ENCODE measurements at regions of chr1 and their contacts with region 1.

Region 1: DNA sequence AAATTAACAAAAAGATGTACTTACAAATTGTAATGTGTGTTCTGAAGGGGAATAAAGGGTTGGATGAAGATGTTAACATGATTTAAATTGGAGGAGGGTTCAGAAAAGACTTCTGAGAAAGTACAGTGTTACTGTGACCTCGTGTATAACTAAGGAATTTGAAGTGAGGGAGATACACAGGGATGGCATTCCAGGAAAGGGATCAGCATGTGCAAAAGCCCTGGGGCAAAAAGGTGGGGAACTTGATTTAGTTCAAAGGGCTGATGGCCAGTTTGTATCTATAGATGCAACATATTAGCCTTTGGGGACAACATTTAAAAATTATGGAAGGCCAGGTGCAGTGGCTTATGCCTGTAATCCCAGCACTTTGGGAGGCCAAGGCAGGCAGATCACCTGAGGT is 33.3 kb upstream of the DEGS1 start:
- DNase-seq: peak; percentile 34
- ATAC-seq: peak; percentile 33; the same call in 1 of the 2 replicates
- H3K4me3 ChIP-seq: no peak overlapping the region
- H3K27ac ChIP-seq: no peak overlapping the region
- H3K4me1 ChIP-seq: no peaks in the 10 kb centered on the region
- H3K27me3 ChIP-seq: no peaks in the 10 kb centered on the region
- CTCF ChIP-seq: no peak

Region 2: GRCh38 chr1:224266105-224266935 is 116.6 kb after region 1 on chr1:
- CTCF ChIA-PET with region 1: no interaction called
- POLR2A ChIA-PET with region 1: no interaction called
- intact Hi-C with region 1: no loop called
- DNase-seq: no peak
- ATAC-seq: no peak
- H3K4me3 ChIP-seq: no peak overlapping the region
- H3K27ac ChIP-seq: no peak overlapping the region
- H3K4me1 ChIP-seq: 0 out of 2 replicates have a peak, but pooled peaks cover 3% of the 10 kb centered on the region
- H3K27me3 ChIP-seq: no peaks in the 10 kb centered on the region
- CTCF ChIP-seq: no peak

Region 3: GRCh38 chr1:225146478-225146877 is 996.8 kb after region 1 on chr1:
- CTCF ChIA-PET with region 1: interaction called, 13 read pairs
- POLR2A ChIA-PET with region 1: no interaction called
- intact Hi-C with region 1: no loop called
- DNase-seq: no peak
- ATAC-seq: no peak
- H3K4me3 ChIP-seq: no peak overlapping the region
- H3K27ac ChIP-seq: no peak overlapping the region
- H3K4me1 ChIP-seq: no peaks in the 10 kb centered on the region
- H3K27me3 ChIP-seq: no peaks in the 10 kb centered on the region
- CTCF ChIP-seq: no peak